ENCODE measurements at regions of chr3 and their contacts with region 1.

Region 1: GRCh38 chr3:11244126-11244677 is 28.0 kb upstream of the ATG7 start:
- DNase-seq: no peak
- ATAC-seq: no peak

Region 2: DNA sequence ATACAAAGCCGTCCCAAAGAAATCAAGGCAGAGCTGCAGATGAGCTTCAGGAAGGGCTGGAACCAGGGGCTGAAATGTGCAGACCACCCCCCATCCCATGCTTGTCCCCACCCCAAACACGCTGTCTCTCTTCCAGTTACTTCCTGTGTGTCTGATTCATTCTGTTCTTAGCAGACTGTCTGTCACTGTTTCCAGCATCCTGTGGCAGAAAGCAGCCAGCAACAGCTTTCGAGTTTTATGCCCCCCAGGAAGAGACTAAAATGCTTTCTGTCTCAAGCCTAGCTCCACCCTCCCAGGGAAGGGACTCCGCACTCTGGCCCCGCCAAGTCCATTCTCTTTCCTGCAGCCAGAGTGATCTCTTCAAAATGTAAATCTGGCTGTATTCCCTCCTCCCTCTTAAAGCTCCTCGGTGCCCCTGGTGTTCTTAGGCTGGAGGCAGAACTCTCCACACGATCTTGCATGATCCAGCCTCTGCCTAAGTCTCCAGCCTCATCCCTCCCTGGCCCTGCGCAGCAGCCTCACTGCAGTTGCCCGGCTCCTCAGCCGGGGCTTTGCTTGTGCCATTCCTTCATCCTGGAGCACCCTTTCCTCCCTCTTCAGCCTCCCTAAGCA is 48.4 kb before region 1 on chr3:
- intact Hi-C with region 1: no loop called
- DNase-seq: no peak
- ATAC-seq: peak in 1 of 2 donors; percentile 24

Region 3: GRCh38 chr3:11312166-11312565 is 68.0 kb after region 1 on chr3:
- intact Hi-C with region 1: loop called in 1 of 2 experiments (anchors 10 kb)
- DNase-seq: no peak
- ATAC-seq: no peak